ENCODE measurements at regions of chr15 and their contacts with region 1.

Region 1: GRCh38 chr15:49155110-49155833 is at the start of gene COPS2:
- DNase-seq: peak; percentile 91 to 99 (median 97)

Region 2: GRCh38 chr15:48877630-48878595 is 277.4 kb before region 1 on chr15 and contains the start of gene EID1:
- intact Hi-C with region 1: loop called (anchors 5 kb)
- DNase-seq: peak; percentile 82 to 97 (median 93)

Region 3: DNA sequence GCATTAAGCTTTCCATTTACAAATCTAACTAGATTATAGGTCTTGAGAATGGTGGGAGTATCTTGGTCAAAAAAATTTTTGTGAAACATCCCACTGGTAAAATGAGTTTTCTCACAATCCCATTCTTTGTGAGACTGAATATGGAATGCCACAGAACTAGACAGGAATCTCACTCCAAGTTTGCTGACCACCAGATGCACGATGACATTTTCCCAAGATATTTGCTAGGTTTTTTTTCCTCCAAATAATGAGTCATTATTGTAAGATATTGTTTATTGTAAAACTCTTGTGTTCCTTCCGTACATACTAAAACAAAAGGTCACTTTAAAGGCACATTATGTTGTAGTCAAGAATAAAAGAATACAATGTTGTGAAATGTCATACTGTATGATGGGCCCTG is 53.7 kb before region 1 on chr15:
- intact Hi-C with region 1: no loop called
- DNase-seq: no peak

Measured in head of caudate nucleus (tissue), 42 donors.